Activated CD8-positive, alpha-beta T cell treated with anti-CD3 and anti-CD28 coated beads, Interleukin-2, amount 10 ng/mL, durations not matched to agents 7 days and 5 days (primary cell): ENCODE measurements at regions of chr20 and their contacts with region 1.

Region 1: DNA sequence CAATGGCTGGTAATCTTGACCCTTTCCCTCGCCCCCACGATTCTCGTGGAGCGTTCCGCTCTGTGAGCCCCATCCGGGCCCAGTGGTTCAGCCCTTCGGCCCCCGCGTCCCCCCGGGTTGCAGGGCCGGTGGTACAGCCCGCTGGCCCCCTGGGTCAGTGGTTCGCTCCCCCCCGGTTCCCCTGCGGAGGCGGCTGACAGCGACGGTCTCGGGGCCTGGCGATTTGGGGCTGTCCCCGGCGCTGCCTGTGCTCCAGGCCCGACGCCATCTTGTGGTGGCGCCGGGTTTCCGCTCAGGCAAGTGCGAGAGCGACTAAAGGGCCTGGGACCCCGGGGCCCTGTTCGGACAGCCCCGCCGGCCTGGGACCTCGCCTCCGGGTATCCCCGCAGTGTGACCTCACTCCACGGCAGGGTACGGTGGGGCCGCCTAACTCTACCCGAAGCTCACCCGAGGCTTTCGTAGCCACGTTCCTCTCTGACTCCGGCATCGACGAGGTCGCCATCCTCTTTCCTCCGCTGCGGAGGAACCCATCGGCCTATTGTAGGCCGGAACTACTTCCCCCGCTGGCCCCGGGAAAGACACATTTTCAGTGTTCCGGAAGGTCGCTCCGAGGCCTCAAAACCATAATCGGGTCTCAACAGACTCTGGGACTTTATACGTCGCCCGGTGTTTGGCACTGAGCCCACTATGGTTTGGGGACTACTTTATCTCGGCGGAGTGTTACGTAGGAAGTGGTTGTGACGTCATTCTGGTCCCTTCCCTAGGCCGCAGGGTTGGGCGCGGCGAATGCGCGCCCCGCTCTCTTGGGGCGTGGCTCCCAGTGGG is at the start of gene ZNF335:
- DNase-seq: peak; percentile 95
- ATAC-seq: peak; percentile 81
- H3K4me3 Mint-ChIP-seq: peak within 1 kb of the TSS; percentile 92
- H3K27ac Mint-ChIP-seq: peak within 1 kb of the TSS; percentile 100
- H3K4me1 Mint-ChIP-seq: peaks cover 23% of the 10 kb centered on the region
- H3K27me3 Mint-ChIP-seq: peaks cover 4% of the 10 kb centered on the region
- total RNA-seq, gene ZNF335: 33.1 to 34.5 TPM

Region 2: DNA sequence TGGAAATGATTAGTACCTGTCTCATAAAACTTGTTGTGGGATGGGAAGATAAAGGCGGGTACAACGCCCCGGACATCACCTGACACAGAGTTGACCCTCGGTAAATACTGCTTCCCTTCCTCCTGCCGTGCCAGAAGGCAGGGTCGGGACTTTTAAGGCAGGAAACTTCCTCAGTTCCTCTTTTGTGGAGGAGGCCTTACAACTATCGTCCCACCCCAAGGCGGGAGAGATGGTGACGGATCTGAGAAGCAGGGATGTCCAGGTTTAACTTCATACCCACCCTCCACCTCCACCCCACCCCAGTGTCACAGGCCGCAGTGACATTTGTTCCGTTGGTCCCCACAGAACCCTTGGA is 179.6 kb before region 1 on chr20:
- CTCF ChIA-PET with region 1: interaction called, 5 read pairs
- POLR2A ChIA-PET with region 1: interaction called, 10 read pairs
- DNase-seq: peak; percentile 35
- ATAC-seq: no peak
- H3K4me3 Mint-ChIP-seq: peak overlapping the region; percentile 82
- H3K27ac Mint-ChIP-seq: peak overlapping the region; percentile 93
- H3K4me1 Mint-ChIP-seq: peaks cover 13% of the 10 kb centered on the region
- H3K27me3 Mint-ChIP-seq: no peaks in the 10 kb centered on the region

Region 3: GRCh38 chr20:45823949-45824835 is 147.7 kb before region 1 on chr20:
- CTCF ChIA-PET with region 1: interaction called, 11 read pairs
- POLR2A ChIA-PET with region 1: no interaction called
- DNase-seq: peak; percentile 63
- ATAC-seq: peak; percentile 77
- H3K4me3 Mint-ChIP-seq: peak overlapping the region; percentile 60
- H3K27ac Mint-ChIP-seq: no peak overlapping the region
- H3K4me1 Mint-ChIP-seq: peaks cover 18% of the 10 kb centered on the region
- H3K27me3 Mint-ChIP-seq: peaks cover 26% of the 10 kb centered on the region

Region 4: GRCh38 chr20:45934586-45935415 is 37.1 kb before region 1 on chr20 and contains the start of gene PCIF1:
- CTCF ChIA-PET with region 1: interaction called, 90 read pairs
- POLR2A ChIA-PET with region 1: interaction called, 52 read pairs
- DNase-seq: peak; percentile 99
- ATAC-seq: peak; percentile 83
- H3K4me3 Mint-ChIP-seq: peak within 1 kb of the TSS; percentile 90
- H3K27ac Mint-ChIP-seq: peak within 1 kb of the TSS; percentile 98
- H3K4me1 Mint-ChIP-seq: peaks cover 29% of the 10 kb centered on the region
- H3K27me3 Mint-ChIP-seq: no peaks in the 10 kb centered on the region
- total RNA-seq, gene PCIF1: 40.3 to 41.2 TPM

Region 5: DNA sequence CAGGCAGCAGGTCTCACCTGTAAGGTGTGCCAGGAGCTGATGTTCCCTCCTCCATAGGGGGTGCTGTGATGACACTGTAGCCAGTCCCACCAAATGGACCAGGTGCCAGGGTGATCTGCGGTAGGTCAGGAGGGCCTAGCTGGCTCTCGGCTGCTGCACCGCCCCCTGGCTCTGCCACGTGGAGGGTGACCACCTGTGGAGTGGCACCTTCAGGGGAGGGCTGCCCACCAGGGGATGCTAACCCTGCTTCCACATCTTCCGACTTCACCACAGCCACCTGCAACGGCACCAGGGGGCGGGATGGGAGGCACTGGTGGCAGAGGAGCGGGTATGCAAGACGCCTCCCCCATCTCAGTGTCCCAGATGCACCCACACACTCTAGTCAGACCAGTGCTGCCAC is 18.2 kb before region 1 on chr20:
- CTCF ChIA-PET with region 1: interaction called, 74 read pairs
- POLR2A ChIA-PET with region 1: interaction called, 6 read pairs
- DNase-seq: no peak
- ATAC-seq: no peak
- H3K4me3 Mint-ChIP-seq: no peak overlapping the region
- H3K27ac Mint-ChIP-seq: no peak overlapping the region
- H3K4me1 Mint-ChIP-seq: no peaks in the 10 kb centered on the region
- H3K27me3 Mint-ChIP-seq: no peaks in the 10 kb centered on the region

Region 6: DNA sequence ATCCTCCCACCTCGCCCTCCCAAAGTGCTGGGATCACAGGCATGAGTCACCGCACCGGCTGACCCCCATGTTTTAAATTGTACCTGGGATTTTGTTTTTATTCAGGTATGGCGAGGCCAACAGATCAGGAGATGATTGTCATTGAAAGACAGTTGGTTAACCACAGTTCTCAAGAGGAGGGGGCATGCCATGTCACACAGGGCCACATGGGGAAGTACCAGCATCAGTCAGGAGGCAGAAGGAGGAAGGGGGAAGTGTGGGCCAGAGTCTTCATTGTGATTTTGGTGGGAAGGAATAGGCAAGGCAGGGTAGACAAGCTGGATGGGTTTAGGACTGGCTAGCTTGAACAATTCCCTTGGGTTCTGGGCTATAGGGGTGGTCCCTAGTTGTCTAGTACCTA is 26.9 kb after region 1 on chr20:
- CTCF ChIA-PET with region 1: interaction called, 23 read pairs
- POLR2A ChIA-PET with region 1: interaction called, 4 read pairs
- DNase-seq: peak; percentile 38
- ATAC-seq: peak; percentile 61
- H3K4me3 Mint-ChIP-seq: no peak overlapping the region
- H3K27ac Mint-ChIP-seq: peak overlapping the region; percentile 0
- H3K4me1 Mint-ChIP-seq: peaks cover 62% of the 10 kb centered on the region
- H3K27me3 Mint-ChIP-seq: peaks cover 15% of the 10 kb centered on the region

Region 7: GRCh38 chr20:46013826-46014516 is 42.1 kb after region 1 on chr20:
- CTCF ChIA-PET with region 1: interaction called, 68 read pairs
- POLR2A ChIA-PET with region 1: interaction called, 4 read pairs
- DNase-seq: peak; percentile 78
- ATAC-seq: peak; percentile 94
- H3K4me3 Mint-ChIP-seq: no peak overlapping the region
- H3K27ac Mint-ChIP-seq: no peak overlapping the region
- H3K4me1 Mint-ChIP-seq: peaks cover 46% of the 10 kb centered on the region
- H3K27me3 Mint-ChIP-seq: peaks cover 59% of the 10 kb centered on the region